HEK293 (cell line): ENCODE measurements at regions of chr19 and their contacts with region 1.

Region 1: GRCh38 chr19:29610563-29611271 is 4.6 kb downstream of the POP4 start:
- H3K4me3 ChIP-seq: no peak overlapping the region
- H3K27ac ChIP-seq: no peak overlapping the region
- H3K4me1 ChIP-seq: peaks cover 7% of the 10 kb centered on the region
- CTCF ChIP-seq: peak; percentile 98

Region 2: GRCh38 chr19:29247872-29248271 is 362.8 kb before region 1 on chr19:
- CTCF ChIA-PET with region 1: no interaction called
- POLR2A ChIA-PET with region 1: no interaction called
- H3K4me3 ChIP-seq: no peak overlapping the region
- H3K27ac ChIP-seq: no peak overlapping the region
- H3K4me1 ChIP-seq: peaks cover 3% of the 10 kb centered on the region; the same call in 1 of the 2 replicates
- CTCF ChIP-seq: no peak

Region 3: DNA sequence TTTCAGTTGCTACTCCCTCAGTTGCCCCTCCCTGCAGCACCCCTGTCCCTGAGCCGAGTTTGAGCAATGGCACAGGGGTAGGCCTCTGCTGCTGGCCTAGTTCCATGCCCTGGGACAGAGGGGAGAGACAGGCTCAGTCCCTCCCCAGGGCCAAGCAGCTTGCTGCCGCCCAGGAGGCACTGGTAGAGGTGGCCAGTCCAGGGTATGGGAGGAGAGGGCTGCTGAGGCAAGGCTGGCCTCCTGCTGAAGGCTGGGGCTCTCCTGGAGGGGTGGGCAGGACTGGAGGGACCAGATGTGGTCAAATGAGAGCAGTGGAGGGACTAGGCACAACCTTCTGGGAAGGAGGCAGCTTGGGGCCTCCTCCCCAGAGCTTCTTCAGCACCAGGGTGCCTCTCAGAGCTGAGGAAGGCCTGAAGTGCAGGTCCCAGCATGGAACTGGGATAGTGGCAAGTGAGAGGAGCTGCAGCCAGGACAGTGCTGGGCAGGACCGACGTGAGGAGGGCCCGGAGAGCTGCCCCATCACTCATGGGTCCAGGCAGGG is 114.7 kb before region 1 on chr19:
- CTCF ChIA-PET with region 1: no interaction called
- POLR2A ChIA-PET with region 1: no interaction called
- H3K4me3 ChIP-seq: no peak overlapping the region
- H3K27ac ChIP-seq: no peak overlapping the region
- H3K4me1 ChIP-seq: peaks cover 7% of the 10 kb centered on the region; the same call in 1 of the 2 replicates
- CTCF ChIP-seq: no peak

Region 4: DNA sequence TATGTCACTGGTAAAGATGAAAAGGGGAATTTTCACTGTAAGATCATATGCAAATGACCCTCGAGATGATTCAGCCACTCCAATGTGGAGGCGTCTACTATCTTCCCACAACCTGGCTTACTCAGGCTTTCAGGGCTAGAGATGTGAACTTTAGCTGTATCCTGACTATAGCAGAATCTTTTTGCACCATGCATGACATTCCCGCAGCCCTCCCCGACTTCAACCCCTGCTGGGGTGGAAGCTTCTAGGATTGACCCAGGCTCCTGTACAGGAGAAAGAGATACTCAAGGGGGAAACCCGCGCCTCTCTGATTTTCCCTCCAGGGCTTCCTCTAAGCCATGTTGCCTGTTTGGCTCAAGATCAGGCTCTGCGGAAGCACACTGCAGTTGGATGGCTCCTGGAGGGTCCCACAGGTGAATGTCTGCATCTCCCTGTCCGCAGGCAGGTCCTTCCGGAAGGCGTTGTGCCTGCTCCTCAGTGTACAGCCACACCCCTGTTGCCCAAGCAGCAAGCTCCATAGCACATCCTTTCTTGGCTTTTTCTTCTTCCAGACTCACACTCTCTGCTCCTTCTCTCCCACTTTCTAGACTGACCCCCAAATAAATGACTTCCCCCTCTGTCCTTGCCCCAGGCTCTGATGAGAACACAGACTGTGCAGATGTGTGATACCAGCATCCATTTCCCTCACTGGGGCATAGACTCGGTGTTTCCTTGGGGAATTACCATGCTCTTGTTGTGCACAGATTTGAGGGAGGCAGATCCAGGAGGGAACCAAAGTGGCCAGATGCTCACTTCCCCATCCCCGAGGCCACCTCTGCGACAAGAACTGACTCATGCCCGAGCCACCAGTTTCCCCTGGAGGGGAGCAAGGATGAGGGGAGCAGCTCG is 33.7 kb before region 1 on chr19:
- CTCF ChIA-PET with region 1: interaction called, 10 read pairs
- POLR2A ChIA-PET with region 1: interaction called, 6 read pairs
- H3K4me3 ChIP-seq: no peak overlapping the region
- H3K27ac ChIP-seq: no peak overlapping the region
- H3K4me1 ChIP-seq: peaks cover 25% of the 10 kb centered on the region
- CTCF ChIP-seq: no peak

Region 5: DNA sequence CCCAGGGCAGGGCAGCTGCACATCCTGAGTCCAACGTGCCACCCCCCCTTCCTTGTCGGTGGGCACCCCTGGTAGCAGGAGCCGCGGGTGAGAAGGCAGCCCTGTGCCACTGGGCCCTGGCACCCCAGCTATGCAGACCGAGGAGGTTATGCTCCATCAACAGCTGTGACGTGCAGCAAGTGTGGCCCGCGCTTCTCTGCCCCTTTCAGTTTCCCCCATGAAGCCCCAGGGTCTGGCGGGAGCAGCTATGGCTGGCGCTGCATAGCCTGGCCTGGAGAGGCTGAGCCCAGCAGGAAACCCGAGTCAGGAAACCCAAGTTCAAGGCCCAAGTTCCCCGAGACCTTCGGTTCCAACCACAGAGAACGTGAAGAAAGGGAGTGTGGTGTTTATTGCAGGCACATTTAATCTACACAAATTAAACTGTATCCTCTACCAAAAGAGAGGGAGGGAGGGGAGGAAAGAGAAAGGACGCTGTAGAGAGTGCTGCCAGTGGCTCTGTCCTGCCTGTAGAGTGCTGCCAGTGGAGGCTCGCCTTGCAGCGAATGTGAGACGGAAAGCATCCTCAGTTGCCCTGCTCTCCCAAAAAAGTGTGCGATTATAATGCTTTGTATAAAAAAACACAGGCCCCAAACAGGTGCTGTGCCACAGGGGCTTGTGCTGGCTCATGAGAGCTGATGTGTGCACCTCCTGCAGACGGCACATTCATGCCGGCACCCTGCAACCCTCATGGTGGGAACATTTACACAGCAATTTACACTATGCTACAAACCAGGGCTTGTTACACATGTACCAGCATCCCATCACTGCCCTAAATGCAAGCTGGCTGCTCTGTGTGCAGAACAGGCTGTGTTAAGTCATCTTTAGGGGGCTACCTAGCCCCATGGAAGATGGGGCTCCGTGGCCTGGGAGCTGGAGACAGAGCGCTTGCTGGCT is 11.7 kb after region 1 on chr19:
- CTCF ChIA-PET with region 1: interaction called, 94 read pairs
- POLR2A ChIA-PET with region 1: interaction called, 39 read pairs
- H3K4me3 ChIP-seq: no peak overlapping the region
- H3K27ac ChIP-seq: no peak overlapping the region
- H3K4me1 ChIP-seq: 0 out of 2 replicates have a peak, but pooled peaks cover 3% of the 10 kb centered on the region
- CTCF ChIP-seq: no peak

Region 6: DNA sequence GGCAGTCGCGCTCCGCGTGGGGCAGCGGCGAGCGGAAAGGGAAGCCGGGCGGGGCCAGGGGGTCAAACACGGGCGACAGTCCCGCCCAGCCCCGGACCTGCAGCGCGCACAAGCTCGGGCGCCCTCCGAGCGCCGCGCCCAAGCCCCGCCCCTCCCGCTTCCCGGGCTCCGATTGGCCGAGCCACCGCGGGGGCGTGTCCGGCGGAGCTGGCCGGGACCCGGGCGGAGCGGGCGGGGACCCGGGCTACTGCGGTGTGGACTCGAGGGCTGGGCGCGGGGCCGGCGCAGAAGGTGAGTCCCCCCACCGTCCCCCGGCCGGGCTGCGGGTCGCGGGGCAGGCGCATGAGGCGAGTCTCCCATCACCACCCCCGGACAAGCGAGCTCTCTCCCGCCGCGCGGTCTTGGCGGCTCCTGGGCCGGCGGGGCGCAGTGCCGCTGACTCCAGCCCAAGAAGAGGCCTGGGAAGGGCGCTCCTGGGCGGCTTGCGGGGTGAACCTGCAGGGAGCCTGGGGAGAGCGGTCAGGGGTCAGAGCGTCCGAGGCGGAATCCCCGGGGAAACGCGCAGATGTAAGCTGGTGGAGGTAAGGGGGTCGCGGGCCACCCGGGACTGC is 54.6 kb after region 1 on chr19 and contains the start of gene PLEKHF1:
- CTCF ChIA-PET with region 1: interaction called, 105 read pairs
- POLR2A ChIA-PET with region 1: interaction called, 37 read pairs
- H3K4me3 ChIP-seq: peak within 1 kb of the TSS; percentile 59
- H3K27ac ChIP-seq: peak within 1 kb of the TSS; percentile 71; the same call in 1 of the 2 replicates
- H3K4me1 ChIP-seq: peaks cover 52% of the 10 kb centered on the region
- CTCF ChIP-seq: peak; percentile 61; the same call in 1 of the 2 replicates

Region 7: GRCh38 chr19:29687244-29687896 is 76.7 kb after region 1 on chr19:
- CTCF ChIA-PET with region 1: interaction called, 184 read pairs
- POLR2A ChIA-PET with region 1: interaction called, 9 read pairs
- H3K4me3 ChIP-seq: no peak overlapping the region
- H3K27ac ChIP-seq: no peak overlapping the region
- H3K4me1 ChIP-seq: no peaks in the 10 kb centered on the region
- CTCF ChIP-seq: no peak

Region 8: GRCh38 chr19:29724102-29724641 is 113.5 kb after region 1 on chr19:
- CTCF ChIA-PET with region 1: interaction called, 29 read pairs
- POLR2A ChIA-PET with region 1: interaction called, 8 read pairs
- H3K4me3 ChIP-seq: no peak overlapping the region
- H3K27ac ChIP-seq: no peak overlapping the region
- H3K4me1 ChIP-seq: no peaks in the 10 kb centered on the region; the same call in 1 of the 2 replicates
- CTCF ChIP-seq: no peak

Region 9: GRCh38 chr19:29887442-29887855 is 276.7 kb after region 1 on chr19:
- CTCF ChIA-PET with region 1: no interaction called
- POLR2A ChIA-PET with region 1: no interaction called
- H3K4me3 ChIP-seq: no peak overlapping the region
- H3K27ac ChIP-seq: no peak overlapping the region
- H3K4me1 ChIP-seq: no peaks in the 10 kb centered on the region
- CTCF ChIP-seq: peak; percentile 56

Region 10: DNA sequence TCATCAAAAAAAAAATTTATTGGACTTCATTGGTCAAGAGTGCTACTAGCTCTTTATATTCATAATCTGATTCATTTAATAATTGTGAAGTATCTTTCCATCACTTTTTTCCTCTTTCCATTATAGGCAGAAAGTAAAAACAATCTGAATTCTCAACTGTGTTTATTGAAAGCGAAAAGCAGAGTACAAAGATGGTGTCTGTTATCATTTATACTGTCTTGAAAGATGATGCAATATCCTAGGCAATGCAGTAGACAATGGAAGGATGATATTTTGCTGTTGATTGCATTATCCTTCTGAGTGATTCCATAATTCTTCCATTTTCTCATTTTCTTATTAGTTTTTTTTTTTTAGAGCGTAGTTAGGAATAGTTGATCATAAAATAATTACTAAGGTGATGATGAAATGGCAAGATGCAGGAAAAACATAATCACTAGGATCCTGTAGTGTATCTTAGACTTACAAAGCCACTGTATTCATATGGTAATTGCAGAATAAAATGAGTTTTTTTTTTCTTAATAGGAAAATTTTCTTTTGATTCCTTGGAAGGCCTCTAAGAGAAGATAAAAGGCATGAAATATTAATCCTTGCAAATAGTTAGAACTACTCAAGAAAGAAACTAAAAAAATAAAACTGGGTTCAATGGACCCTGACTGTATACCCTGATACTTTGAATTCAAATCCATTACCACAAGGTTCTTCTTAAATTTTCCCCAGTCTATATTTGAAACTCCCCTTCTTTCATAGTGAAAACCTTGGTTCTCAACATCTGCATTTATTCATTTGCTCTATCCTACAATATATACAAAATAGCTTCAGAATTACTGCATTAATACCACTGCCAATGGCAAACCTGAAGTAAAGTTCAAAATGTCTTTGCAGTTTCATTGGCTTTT is 342.9 kb after region 1 on chr19:
- CTCF ChIA-PET with region 1: no interaction called
- POLR2A ChIA-PET with region 1: no interaction called
- H3K4me3 ChIP-seq: no peak overlapping the region
- H3K27ac ChIP-seq: no peak overlapping the region
- H3K4me1 ChIP-seq: peaks cover 29% of the 10 kb centered on the region
- CTCF ChIP-seq: no peak